ENCODE measurements at regions of chr2 and their contacts with region 1.

Region 1: GRCh38 chr2:203650860-203651613 is 55.4 kb upstream of the CD28 start:
- DNase-seq: peak in 1 of 3 donors; percentile 29
- ATAC-seq: peak; percentile 84 to 86
- H3K4me3 ChIP-seq: no peak overlapping the region
- H3K27ac ChIP-seq: peak overlapping the region; percentile 63
- H3K4me1 ChIP-seq: peaks cover 7% of the 10 kb centered on the region
- H3K27me3 ChIP-seq: no peaks in the 10 kb centered on the region

Region 2: GRCh38 chr2:203484266-203485112 is 166.5 kb before region 1 on chr2:
- intact Hi-C with region 1: loop called in 1 of 4 experiments (anchors 10 kb)
- DNase-seq: no peak
- ATAC-seq: peak; percentile 77 to 85
- H3K4me3 ChIP-seq: no peak overlapping the region
- H3K27ac ChIP-seq: no peak overlapping the region
- H3K4me1 ChIP-seq: no peaks in the 10 kb centered on the region
- H3K27me3 ChIP-seq: no peaks in the 10 kb centered on the region

Region 3: GRCh38 chr2:203535078-203535783 is 115.8 kb before region 1 on chr2 and contains the start of gene RAPH1:
- intact Hi-C with region 1: loop called in 1 of 4 experiments (anchors 10 kb)
- DNase-seq: peak; percentile 93 to 97 (median 95)
- ATAC-seq: peak; percentile 96 to 97
- H3K4me3 ChIP-seq: peak within 1 kb of the TSS; percentile 84
- H3K27ac ChIP-seq: peak within 1 kb of the TSS; percentile 83
- H3K4me1 ChIP-seq: peaks cover 2% of the 10 kb centered on the region
- H3K27me3 ChIP-seq: no peaks in the 10 kb centered on the region
- total RNA-seq, gene RAPH1: 18.4 to 32.2 (median 22.3) TPM

Region 4: DNA sequence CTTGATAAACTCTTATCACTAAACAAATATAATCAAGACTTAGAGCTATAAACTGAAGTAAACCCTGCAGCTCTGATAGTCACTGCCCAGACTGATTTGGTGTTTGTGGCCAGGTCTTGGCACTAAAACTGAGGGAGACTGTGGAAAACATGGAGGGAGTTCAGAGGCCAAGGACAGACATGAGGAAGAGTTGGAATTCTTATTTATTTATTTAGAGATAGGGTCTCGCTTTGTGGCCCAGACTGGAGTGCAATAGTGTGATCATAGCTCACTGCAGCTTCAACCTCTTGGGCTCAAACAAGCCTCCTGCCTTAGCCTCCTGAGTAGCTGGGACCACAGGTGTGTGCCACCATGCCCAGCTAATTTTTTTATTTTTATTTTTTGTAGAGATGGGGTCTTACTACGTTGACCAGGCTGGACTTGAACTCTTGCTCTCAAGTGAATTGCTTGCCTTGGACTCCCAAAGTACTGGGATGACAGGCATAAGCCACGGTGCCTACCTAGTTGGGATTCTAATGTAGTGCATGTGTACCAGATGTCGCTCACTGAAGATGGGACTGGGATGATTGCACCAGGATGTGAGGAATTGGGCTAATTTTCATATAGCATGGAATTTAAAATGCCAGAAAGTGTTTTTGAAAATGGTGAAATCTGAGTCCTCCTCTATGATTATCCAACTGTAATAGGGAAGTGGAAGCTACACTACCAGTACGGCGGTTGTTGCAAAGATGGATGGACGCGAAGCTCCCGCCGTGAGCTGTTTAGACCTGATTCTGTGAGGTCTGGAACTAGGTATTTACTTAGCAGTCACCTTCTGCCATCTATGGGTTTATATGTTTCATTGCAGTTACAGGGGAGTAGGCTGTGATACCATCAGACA is 163.9 kb after region 1 on chr2:
- intact Hi-C with region 1: loop called in 2 of 4 experiments (anchors 5 to 10 kb)
- DNase-seq: peak; percentile 48 to 82 (median 78)
- ATAC-seq: peak; percentile 79 to 89
- H3K4me3 ChIP-seq: peak overlapping the region; percentile 17
- H3K27ac ChIP-seq: peak overlapping the region; percentile 55
- H3K4me1 ChIP-seq: peaks cover 4% of the 10 kb centered on the region
- H3K27me3 ChIP-seq: no peaks in the 10 kb centered on the region